ENCODE measurements at regions of chr10 and their contacts with region 1.

Region 1: DNA sequence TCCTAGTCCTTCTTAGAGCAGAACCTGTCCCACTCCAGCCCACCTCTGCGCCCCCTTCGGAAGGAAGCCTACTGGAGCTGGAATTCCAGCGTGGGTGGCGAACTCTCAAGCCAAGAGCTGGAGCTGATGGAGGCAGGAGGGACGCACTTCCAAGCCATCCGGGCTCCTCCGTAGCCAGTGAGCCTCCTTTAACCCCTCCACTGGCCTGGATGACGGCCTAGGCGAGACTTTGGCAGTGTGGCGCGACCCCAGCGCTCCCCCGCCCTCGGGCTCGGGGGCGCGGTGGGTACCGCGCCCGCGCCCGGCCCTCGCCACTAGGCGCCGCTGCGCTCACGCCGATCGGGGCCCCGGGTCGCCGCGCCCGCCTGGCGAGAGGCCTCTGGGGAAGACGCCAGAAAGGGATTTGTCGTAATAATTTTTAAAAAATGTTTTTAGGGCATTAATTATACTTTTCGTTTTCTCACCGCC is 5.1 kb upstream of the EMX2 start:
- DNase-seq: no peak
- H3K4me3 Mint-ChIP-seq: no peak overlapping the region
- H3K27ac Mint-ChIP-seq: no peak overlapping the region
- H3K4me1 Mint-ChIP-seq: no peaks in the 10 kb centered on the region
- H3K27me3 Mint-ChIP-seq: peaks cover 73% of the 10 kb centered on the region

Region 2: DNA sequence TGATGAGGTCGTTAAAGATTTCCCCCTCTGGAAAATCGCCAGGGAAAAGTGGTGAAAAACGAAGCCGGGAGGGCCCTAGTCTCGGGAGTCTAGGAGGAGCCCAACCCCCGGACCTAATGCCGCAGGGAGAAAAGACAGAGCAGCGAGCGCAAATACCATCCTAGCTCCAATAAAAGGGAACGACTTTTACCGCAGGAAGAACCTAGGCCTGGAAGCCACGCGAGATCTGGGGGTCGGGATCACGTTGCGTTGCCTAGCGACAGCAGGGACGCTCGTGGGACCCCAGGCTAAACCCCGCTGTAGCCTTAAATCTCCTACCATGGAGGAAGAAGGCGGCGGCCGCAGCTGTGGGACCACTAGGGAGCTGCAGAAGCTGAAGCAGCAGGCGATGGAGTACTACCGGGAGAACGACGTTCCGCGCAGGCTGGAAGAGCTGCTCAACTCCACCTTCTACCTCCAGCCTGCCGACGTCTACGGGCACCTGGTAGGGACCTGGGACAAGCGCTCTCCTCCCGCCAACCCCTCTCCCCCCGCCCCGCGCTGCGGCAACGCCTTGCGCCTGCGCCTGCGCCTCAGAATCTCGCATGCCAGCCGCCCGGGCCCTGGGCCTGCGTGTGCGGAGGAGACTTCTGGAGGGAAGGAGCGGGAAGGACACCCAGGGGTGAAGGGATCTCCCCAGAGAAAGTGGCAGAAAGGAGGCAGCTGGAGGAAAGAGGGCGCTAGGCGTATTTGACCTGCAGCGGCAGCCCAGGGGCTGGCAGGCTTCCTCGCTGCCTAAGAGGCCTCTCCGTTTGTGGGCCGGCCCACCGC is 688.0 kb before region 1 on chr10 and contains the start of gene ENO4:
- intact Hi-C with region 1: loop called (anchors 10 kb)
- DNase-seq: no peak
- H3K4me3 Mint-ChIP-seq: no peak within 1 kb of the TSS
- H3K27ac Mint-ChIP-seq: no peak within 1 kb of the TSS
- H3K4me1 Mint-ChIP-seq: no peaks in the 10 kb centered on the region
- H3K27me3 Mint-ChIP-seq: peaks cover 51% of the 10 kb centered on the region
- total RNA-seq, gene ENO4: not detected in 2 replicates

Region 3: GRCh38 chr10:117131376-117132327 is 405.8 kb before region 1 on chr10:
- intact Hi-C with region 1: loop called (anchors 2 kb)
- DNase-seq: no peak
- H3K4me3 Mint-ChIP-seq: no peak overlapping the region
- H3K27ac Mint-ChIP-seq: no peak overlapping the region
- H3K4me1 Mint-ChIP-seq: peaks cover 2% of the 10 kb centered on the region
- H3K27me3 Mint-ChIP-seq: peaks cover 66% of the 10 kb centered on the region

Region 4: GRCh38 chr10:117167789-117168674 is 369.4 kb before region 1 on chr10:
- intact Hi-C with region 1: loop called (anchors 2 kb)
- DNase-seq: peak; percentile 55
- H3K4me3 Mint-ChIP-seq: no peak overlapping the region
- H3K27ac Mint-ChIP-seq: no peak overlapping the region
- H3K4me1 Mint-ChIP-seq: no peaks in the 10 kb centered on the region
- H3K27me3 Mint-ChIP-seq: peaks cover 78% of the 10 kb centered on the region

Region 5: DNA sequence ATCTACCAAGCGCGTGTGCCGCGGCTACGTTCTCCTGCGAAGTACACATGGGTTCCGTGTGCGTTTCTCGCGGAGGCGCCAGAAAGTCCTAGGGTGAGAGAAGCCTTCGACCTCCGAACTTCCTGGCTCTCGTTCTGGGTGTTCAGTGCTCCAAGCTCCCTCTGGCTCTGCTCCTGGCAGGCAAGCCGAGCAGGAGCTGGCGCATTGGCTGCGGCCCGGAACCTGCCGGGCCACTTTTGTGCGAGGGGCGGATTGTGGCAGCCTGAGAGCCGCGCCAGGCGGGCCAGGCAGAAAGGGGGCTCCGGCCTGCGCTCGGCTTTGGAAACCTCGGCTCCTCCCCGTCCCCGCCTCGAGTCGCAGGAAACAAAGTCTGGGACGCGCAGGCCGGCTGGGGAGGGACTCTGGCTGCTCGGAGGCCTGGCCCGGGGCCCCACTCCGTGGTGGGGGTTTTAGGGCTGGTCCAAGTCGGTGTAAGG is 14.7 kb after region 1 on chr10:
- intact Hi-C with region 1: loop called (anchors 2 kb)
- DNase-seq: no peak
- H3K4me3 Mint-ChIP-seq: no peak overlapping the region
- H3K27ac Mint-ChIP-seq: no peak overlapping the region
- H3K4me1 Mint-ChIP-seq: peaks cover 6% of the 10 kb centered on the region
- H3K27me3 Mint-ChIP-seq: peaks cover 73% of the 10 kb centered on the region

Region 6: GRCh38 chr10:118241229-118242137 is 704.0 kb after region 1 on chr10:
- intact Hi-C with region 1: loop called (anchors 2 kb)
- DNase-seq: peak; percentile 43
- H3K4me3 Mint-ChIP-seq: no peak overlapping the region
- H3K27ac Mint-ChIP-seq: no peak overlapping the region
- H3K4me1 Mint-ChIP-seq: no peaks in the 10 kb centered on the region
- H3K27me3 Mint-ChIP-seq: peaks cover 26% of the 10 kb centered on the region